GM12878 (cell line): ENCODE measurements at regions of chr10 and their contacts with region 1.

Region 1: GRCh38 chr10:92240289-92241157 is 50.4 kb downstream of the CPEB3 start:
- DNase-seq: peak; percentile 53
- ATAC-seq: peak; percentile 63
- H3K4me3 ChIP-seq: peak overlapping the region; percentile 90
- H3K27ac ChIP-seq: peak overlapping the region; percentile 47
- H3K4me1 ChIP-seq: peaks cover 14% of the 10 kb centered on the region
- H3K27me3 ChIP-seq: no peaks in the 10 kb centered on the region; a peak in 1 of 4 replicates
- CTCF ChIP-seq: no peak
- EP300 ChIP-seq: peak in 1 of 2 experiments; percentile 58; a peak in 1 of 4 replicates
- POLR2A ChIP-seq: peak; percentile 48; the same call in 1 of the 2 replicates
- RAD21 ChIP-seq: no peak

Region 2: DNA sequence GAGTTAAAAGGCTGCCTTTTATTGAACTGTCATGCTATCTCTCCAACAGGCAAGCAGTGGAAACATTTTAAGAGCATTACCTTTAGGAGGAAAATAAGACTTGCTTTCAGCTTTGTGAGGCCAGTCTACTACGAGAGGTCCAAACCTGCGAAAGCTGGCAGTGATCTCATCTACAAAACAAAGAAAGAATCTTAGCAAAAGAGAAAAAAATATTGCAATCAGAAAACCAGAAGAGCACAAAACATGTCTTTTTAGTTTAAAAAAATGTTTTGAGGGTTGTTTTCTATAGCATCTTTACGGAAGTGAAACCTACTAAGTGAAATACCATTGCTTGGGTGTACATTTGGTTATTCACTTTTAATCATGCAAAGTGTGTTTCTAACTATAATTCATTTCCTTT is 97.6 kb before region 1 on chr10:
- CTCF ChIA-PET with region 1: no interaction called
- POLR2A ChIA-PET with region 1: no interaction called
- RAD21 ChIA-PET with region 1: no interaction called
- SMC1A ChIA-PET with region 1: interaction called, 3 read pairs
- in situ Hi-C with region 1: no loop called
- intact Hi-C with region 1: loop called (anchors 2 kb)
- DNase-seq: peak; percentile 43
- ATAC-seq: peak; percentile 79
- H3K4me3 ChIP-seq: peak overlapping the region; percentile 39
- H3K27ac ChIP-seq: peak overlapping the region; percentile 76
- H3K4me1 ChIP-seq: peaks cover 15% of the 10 kb centered on the region
- H3K27me3 ChIP-seq: no peaks in the 10 kb centered on the region
- CTCF ChIP-seq: no peak
- EP300 ChIP-seq: peak; percentile 67 to 79; a peak in 2 of 4 replicates
- POLR2A ChIP-seq: no peak
- RAD21 ChIP-seq: no peak

Region 3: GRCh38 chr10:92173996-92174395 is 66.5 kb before region 1 on chr10:
- CTCF ChIA-PET with region 1: no interaction called
- POLR2A ChIA-PET with region 1: no interaction called
- RAD21 ChIA-PET with region 1: no interaction called
- SMC1A ChIA-PET with region 1: no interaction called
- in situ Hi-C with region 1: no loop called
- intact Hi-C with region 1: no loop called
- DNase-seq: no peak
- ATAC-seq: no peak
- H3K4me3 ChIP-seq: no peak overlapping the region
- H3K27ac ChIP-seq: no peak overlapping the region
- H3K4me1 ChIP-seq: no peaks in the 10 kb centered on the region
- H3K27me3 ChIP-seq: no peaks in the 10 kb centered on the region
- CTCF ChIP-seq: no peak
- EP300 ChIP-seq: no peak
- POLR2A ChIP-seq: no peak
- RAD21 ChIP-seq: no peak

Region 4: GRCh38 chr10:92208736-92209327 is 31.7 kb before region 1 on chr10:
- CTCF ChIA-PET with region 1: interaction called, 3 read pairs
- POLR2A ChIA-PET with region 1: no interaction called
- RAD21 ChIA-PET with region 1: interaction called, 9 read pairs
- SMC1A ChIA-PET with region 1: interaction called, 7 read pairs
- in situ Hi-C with region 1: no loop called
- intact Hi-C with region 1: loop called (anchors 2 kb)
- DNase-seq: no peak
- ATAC-seq: no peak
- H3K4me3 ChIP-seq: no peak overlapping the region
- H3K27ac ChIP-seq: no peak overlapping the region
- H3K4me1 ChIP-seq: peaks cover 19% of the 10 kb centered on the region
- H3K27me3 ChIP-seq: no peaks in the 10 kb centered on the region
- CTCF ChIP-seq: no peak
- EP300 ChIP-seq: no peak
- POLR2A ChIP-seq: no peak
- RAD21 ChIP-seq: no peak